ENCODE measurements at regions of chr17 and their contacts with region 1.

Region 1: GRCh38 chr17:80454557-80455335 is 21.7 kb downstream of the NPTX1 start:
- DNase-seq: peak; percentile 96 to 98
- H3K4me3 ChIP-seq: peak overlapping the region; percentile 91
- H3K4me3 Mint-ChIP-seq: peak overlapping the region; percentile 89
- H3K27ac Mint-ChIP-seq: peak overlapping the region; percentile 97
- H3K4me1 ChIP-seq: peaks cover 9% of the 10 kb centered on the region
- H3K4me1 Mint-ChIP-seq: no peaks in the 10 kb centered on the region
- H3K27me3 ChIP-seq: no peaks in the 10 kb centered on the region
- H3K27me3 Mint-ChIP-seq: peaks cover 4% of the 10 kb centered on the region
- CTCF ChIP-seq: no peak

Region 2: GRCh38 chr17:80307994-80308691 is 146.6 kb before region 1 on chr17:
- CTCF ChIA-PET with region 1: no interaction called
- POLR2A ChIA-PET with region 1: no interaction called
- intact Hi-C with region 1: no loop called
- DNase-seq: no peak
- H3K4me3 ChIP-seq: no peak overlapping the region
- H3K4me3 Mint-ChIP-seq: no peak overlapping the region
- H3K27ac Mint-ChIP-seq: peak overlapping the region; percentile 75
- H3K4me1 ChIP-seq: peaks cover 14% of the 10 kb centered on the region
- H3K4me1 Mint-ChIP-seq: peaks cover 16% of the 10 kb centered on the region
- H3K27me3 ChIP-seq: no peaks in the 10 kb centered on the region
- H3K27me3 Mint-ChIP-seq: no peaks in the 10 kb centered on the region
- CTCF ChIP-seq: no peak

Region 3: GRCh38 chr17:80477647-80478478 is 23.1 kb after region 1 on chr17:
- CTCF ChIA-PET with region 1: no interaction called
- POLR2A ChIA-PET with region 1: interaction called, 16 read pairs
- intact Hi-C with region 1: no loop called
- DNase-seq: no peak
- H3K4me3 ChIP-seq: no peak overlapping the region; the same call in 1 of the 2 replicates
- H3K4me3 Mint-ChIP-seq: no peak overlapping the region
- H3K27ac Mint-ChIP-seq: no peak overlapping the region
- H3K4me1 ChIP-seq: peaks cover 29% of the 10 kb centered on the region
- H3K4me1 Mint-ChIP-seq: peaks cover 11% of the 10 kb centered on the region
- H3K27me3 ChIP-seq: peaks cover 6% of the 10 kb centered on the region
- H3K27me3 Mint-ChIP-seq: peaks cover 34% of the 10 kb centered on the region
- CTCF ChIP-seq: no peak

Region 4: DNA sequence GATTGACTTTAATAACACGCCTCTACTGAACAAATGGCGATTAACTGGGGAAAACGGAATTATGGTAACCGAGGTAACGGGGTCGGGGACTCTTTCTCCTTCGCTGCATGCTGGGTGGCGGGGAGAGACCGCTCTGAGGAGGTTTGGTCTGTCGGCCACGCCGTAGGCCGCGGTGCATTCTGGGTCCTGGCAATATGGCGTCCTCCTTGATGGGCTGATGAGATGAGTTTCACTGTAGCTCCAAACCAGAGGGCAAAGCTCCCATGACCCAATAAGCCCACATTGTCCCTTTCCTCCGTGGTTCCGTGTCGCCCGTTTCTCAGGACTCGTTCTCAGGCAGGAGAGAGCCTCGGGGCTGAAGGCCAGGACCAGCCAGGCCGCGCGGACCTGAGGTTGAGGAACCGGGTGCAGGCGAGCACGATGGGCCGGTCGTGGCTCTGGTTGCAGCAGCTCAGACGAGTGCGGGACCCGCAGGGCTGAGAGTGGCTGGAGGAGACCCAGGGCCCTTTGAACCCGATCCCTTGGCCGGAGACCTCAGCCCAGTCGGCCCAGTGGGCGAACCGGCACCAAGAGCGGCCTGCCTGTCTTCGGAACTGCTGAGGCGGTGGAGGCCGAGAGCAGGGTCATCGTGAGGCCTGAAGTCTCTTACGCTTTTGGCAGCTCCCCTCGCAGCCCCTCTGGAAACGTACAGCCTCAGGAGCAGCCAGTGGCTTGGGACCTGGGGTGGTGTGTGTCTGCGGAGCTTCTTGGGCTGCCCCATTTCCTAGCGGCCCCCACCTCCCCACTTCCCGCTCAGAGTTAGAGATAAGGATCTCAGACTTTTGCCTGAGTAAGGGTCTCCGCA is 90.1 kb after region 1 on chr17 and contains the start of gene RPTOR:
- CTCF ChIA-PET with region 1: no interaction called
- POLR2A ChIA-PET with region 1: interaction called, 5 read pairs
- intact Hi-C with region 1: loop called (anchors 1 kb)
- DNase-seq: peak; percentile 91 to 94
- H3K4me3 ChIP-seq: peak within 1 kb of the TSS; percentile 74
- H3K4me3 Mint-ChIP-seq: peak within 1 kb of the TSS; percentile 93
- H3K27ac Mint-ChIP-seq: peak within 1 kb of the TSS; percentile 90
- H3K4me1 ChIP-seq: peaks cover 17% of the 10 kb centered on the region; the same call in 1 of the 2 replicates
- H3K4me1 Mint-ChIP-seq: peaks cover 8% of the 10 kb centered on the region
- H3K27me3 ChIP-seq: no peaks in the 10 kb centered on the region
- H3K27me3 Mint-ChIP-seq: no peaks in the 10 kb centered on the region
- CTCF ChIP-seq: no peak
- total RNA-seq, gene RPTOR: 60.0 and 66.7 TPM in 2 replicates

Region 5: DNA sequence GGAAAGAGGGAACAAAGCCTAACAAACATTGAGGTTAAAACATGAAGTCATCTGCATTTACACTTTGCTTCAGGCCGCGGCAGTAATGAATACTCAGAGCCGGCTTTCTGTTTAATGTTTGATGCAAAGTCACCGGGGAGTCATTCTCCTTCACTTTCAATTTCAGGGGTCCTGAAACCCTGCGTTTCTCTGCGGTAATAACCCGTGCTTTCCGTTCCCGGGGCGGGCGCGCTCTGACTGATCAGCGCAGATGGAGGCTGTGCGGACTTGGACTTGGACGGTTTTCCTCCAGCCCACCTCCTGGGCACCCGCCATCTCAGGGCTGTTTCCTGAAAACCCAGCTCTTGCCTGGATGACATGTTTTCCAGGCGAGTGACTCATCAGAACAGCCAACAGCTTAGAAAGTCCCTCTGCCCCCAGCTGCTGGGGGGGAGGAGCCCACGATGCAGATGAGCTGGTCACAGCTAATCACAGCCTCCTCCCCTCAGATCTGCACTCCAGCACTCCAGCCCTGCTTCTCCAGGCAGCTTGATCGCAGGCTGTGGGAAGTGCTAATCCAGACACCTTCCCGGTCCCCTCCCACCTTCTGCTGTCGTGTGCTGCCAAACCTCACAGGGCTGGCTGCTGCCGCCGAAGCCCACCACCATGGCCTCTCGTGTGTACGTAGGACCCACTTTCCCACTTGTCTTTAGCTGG is 378.3 kb after region 1 on chr17:
- CTCF ChIA-PET with region 1: no interaction called
- POLR2A ChIA-PET with region 1: interaction called, 11 read pairs
- intact Hi-C with region 1: no loop called
- DNase-seq: peak; percentile 89 to 91
- H3K4me3 ChIP-seq: peak overlapping the region; percentile 39
- H3K4me3 Mint-ChIP-seq: peak overlapping the region; percentile 77
- H3K27ac Mint-ChIP-seq: peak overlapping the region; percentile 98
- H3K4me1 ChIP-seq: peaks cover 15% of the 10 kb centered on the region
- H3K4me1 Mint-ChIP-seq: peaks cover 20% of the 10 kb centered on the region
- H3K27me3 ChIP-seq: no peaks in the 10 kb centered on the region
- H3K27me3 Mint-ChIP-seq: no peaks in the 10 kb centered on the region
- CTCF ChIP-seq: no peak

Region 6: DNA sequence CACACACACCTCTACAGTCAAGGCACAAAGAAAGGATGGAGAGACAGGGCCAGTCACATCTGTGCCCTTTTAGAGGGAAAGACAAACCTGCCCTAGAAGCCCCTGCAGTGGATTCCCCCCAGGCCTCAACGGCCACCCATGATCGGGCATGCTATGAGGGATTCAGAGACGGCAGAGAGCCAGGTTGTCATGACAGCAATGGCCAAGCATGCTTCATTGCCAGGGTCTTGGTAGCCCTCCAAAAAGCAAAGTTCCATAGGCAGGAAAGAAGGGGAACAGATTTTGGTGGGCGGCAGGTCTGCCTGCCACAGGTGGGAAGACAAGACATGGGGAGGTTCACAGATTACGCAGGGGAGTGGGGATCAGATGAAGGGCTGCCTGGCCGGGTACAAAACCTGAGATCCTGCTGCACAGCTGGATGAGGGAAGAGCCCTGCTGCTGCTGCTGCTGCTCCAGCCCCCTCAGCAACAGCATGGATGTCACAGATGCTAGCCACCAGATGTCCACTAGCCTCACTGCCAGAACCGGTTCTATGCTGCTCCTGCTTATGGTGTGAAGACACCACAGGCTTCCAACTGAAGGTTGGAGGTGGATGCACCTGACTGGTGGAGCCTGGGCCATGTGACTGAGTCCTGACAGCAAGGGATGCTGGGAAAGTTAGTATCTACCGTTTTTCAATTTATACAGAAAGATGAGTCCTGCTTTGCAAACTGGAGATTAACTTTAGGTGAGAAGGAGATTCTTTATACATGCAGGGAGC is 1040.1 kb after region 1 on chr17:
- CTCF ChIA-PET with region 1: no interaction called
- POLR2A ChIA-PET with region 1: interaction called, 19 read pairs
- intact Hi-C with region 1: no loop called
- DNase-seq: peak; percentile 81 to 86
- H3K4me3 ChIP-seq: no peak overlapping the region
- H3K4me3 Mint-ChIP-seq: peak overlapping the region; percentile 52
- H3K27ac Mint-ChIP-seq: peak overlapping the region; percentile 28
- H3K4me1 ChIP-seq: peaks cover 12% of the 10 kb centered on the region
- H3K4me1 Mint-ChIP-seq: peaks cover 17% of the 10 kb centered on the region
- H3K27me3 ChIP-seq: no peaks in the 10 kb centered on the region
- H3K27me3 Mint-ChIP-seq: no peaks in the 10 kb centered on the region
- CTCF ChIP-seq: no peak

Measured in Caco-2 (cell line).